Mammary epithelial cell (primary cell): ENCODE measurements at regions of chr13 and their contacts with region 1.

Region 1: DNA sequence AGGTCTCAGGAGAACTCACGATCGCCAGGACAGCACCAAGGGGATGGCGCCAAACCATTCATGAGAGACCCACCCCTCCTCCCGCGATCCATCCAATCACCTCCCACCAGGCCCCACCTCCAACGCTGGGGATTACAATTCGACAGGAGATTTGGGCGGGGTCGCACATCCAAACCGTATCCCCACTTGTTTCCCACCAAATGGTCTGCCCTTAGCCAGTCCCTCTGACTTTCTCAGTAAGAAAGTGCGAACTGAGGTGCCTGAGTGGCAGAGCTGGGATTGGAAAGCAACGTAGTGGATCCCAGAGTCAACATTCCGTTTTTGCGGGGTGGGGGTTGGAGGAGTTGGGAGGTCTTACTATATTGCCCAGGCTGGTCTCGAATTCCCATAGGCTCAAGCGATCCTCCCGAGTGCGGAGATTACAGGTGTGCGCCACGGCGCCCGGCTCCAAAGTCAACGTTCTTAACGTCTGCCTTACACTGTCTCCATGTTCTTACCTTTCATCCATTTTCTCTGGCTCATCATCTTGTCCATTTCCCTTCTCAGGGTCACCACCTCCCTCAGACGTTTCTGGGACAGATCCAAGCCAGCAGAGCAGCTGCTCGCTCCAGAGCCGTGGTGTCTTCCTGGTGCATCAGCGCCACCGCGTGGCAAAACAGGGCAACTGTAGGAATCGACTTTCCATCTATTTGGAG is 102.7 kb upstream of the ABCC4 start:
- DNase-seq: peak; percentile 55
- H3K4me3 ChIP-seq: peak overlapping the region in 2 of 3 experiments; percentile 12 to 41
- H3K27ac ChIP-seq: no peak overlapping the region
- H3K4me1 ChIP-seq: peaks cover 4% of the 10 kb centered on the region
- H3K27me3 ChIP-seq: no peaks in the 10 kb centered on the region
- CTCF ChIP-seq: peak; percentile 90 to 93

Region 2: DNA sequence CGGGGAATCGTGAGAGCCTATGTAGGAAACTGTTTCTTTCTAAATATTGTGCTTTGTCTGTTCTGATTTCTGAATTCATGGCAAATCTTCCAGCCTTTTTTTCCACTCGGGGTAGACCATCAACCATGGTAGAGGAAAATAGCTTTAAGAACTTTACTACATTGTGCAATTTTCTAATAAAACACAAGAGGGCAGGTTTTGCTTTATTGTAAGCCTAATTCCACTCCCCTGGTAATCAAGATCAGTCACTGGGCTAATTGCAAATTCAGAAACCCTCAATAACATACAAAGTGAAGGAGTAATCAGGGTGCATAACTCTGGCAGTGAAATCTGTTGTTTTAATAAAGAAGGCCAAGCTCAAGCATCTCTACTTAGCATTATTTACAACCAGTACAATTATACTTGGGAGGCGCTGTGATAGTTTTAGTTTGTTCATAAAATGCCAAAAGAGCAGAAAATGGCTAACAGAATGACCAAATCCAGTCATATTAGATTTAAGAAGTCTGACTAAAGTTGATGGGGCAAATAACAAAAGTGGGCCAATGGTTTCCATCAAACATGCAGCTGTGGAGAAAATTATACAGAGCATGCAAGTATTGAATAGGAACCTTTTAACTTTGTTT is 968.3 kb before region 1 on chr13:
- CTCF ChIA-PET with region 1: no interaction called
- dilution Hi-C with region 1: no loop called
- in situ Hi-C with region 1: no loop called
- intact Hi-C with region 1: loop called (anchors 10 kb)
- DNase-seq: peak; percentile 28
- H3K4me3 ChIP-seq: no peak overlapping the region
- H3K27ac ChIP-seq: no peak overlapping the region
- H3K4me1 ChIP-seq: no peaks in the 10 kb centered on the region
- H3K27me3 ChIP-seq: peaks cover 3% of the 10 kb centered on the region
- CTCF ChIP-seq: peak; percentile 45 to 61

Region 3: DNA sequence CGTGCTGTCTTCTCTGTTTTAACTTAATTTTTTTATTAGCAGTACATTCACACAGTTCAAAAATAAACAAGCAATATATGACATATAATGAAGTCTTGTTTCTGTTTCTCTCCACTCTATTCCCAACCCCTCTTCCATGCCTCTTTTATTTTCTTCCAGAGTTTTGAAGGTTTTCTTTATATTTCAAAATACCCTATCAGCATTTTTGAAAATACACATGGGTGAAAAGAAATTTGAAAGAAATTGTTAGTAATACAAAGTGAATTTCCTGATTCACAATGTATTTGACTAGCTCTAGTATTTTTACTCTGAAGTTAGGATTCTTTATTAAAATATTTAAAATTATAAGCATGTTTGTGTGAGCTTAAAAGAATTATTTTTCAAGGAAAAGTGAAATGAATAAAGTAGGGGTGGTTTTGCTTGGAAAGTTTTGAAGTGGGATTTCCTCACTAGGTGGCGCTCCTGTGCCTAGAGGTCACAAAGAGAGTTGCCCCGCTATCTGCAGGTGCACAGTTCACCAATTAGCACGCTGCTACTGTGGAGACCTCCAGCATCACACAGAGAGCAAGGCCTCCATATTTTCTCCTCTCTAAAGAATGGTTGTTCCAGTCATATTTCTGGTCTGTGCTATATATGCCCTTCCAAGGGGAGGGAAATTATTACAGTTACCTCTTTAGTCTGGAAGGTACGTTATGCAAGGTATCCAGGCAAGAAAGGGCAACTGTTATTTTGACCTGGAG is 729.2 kb before region 1 on chr13:
- CTCF ChIA-PET with region 1: no interaction called
- dilution Hi-C with region 1: no loop called
- in situ Hi-C with region 1: no loop called
- intact Hi-C with region 1: loop called (anchors 2 kb)
- DNase-seq: peak; percentile 24
- H3K4me3 ChIP-seq: no peak overlapping the region
- H3K27ac ChIP-seq: no peak overlapping the region
- H3K4me1 ChIP-seq: no peaks in the 10 kb centered on the region
- H3K27me3 ChIP-seq: peaks cover 2% of the 10 kb centered on the region
- CTCF ChIP-seq: peak; percentile 73 to 86

Region 4: GRCh38 chr13:95083758-95084157 is 320.2 kb before region 1 on chr13:
- CTCF ChIA-PET with region 1: no interaction called
- dilution Hi-C with region 1: no loop called
- in situ Hi-C with region 1: no loop called
- intact Hi-C with region 1: no loop called
- DNase-seq: peak; percentile 65
- H3K4me3 ChIP-seq: no peak overlapping the region
- H3K27ac ChIP-seq: no peak overlapping the region
- H3K4me1 ChIP-seq: no peaks in the 10 kb centered on the region
- H3K27me3 ChIP-seq: no peaks in the 10 kb centered on the region
- CTCF ChIP-seq: no peak

Region 5: GRCh38 chr13:95301183-95301967 is 102.6 kb before region 1 on chr13 and contains the start of gene ABCC4:
- CTCF ChIA-PET with region 1: interaction called, 5 read pairs
- dilution Hi-C with region 1: no loop called
- in situ Hi-C with region 1: no loop called
- intact Hi-C with region 1: loop called (anchors 1 kb)
- DNase-seq: peak; percentile 72
- H3K4me3 ChIP-seq: peak within 1 kb of the TSS; percentile 64 to 94 (median 75)
- H3K27ac ChIP-seq: peak within 1 kb of the TSS; percentile 45
- H3K4me1 ChIP-seq: peaks cover 12% of the 10 kb centered on the region
- H3K27me3 ChIP-seq: no peaks in the 10 kb centered on the region
- CTCF ChIP-seq: no peak
- total RNA-seq, gene ABCC4: 4.0 to 8.1 TPM

Region 6: DNA sequence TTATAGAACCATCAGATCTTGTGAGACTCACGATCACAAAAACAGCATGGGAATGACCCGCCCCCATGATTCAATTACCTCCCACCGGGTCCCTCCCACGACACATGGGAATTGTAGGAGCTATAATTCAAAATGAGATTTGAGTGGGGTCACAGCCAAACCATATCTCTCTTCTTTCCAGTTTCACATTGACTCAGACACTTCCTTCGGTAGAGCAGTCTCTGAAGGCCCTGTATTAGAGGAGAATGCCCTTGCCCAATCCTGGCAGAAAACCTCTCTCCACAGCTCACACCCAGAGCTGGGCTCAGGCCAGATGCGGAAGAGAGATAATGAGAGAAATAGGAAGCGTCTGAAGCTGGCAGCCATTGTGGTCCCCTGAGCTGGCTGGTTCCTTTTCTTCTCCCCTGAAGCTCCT is 76.2 kb after region 1 on chr13:
- CTCF ChIA-PET with region 1: no interaction called
- dilution Hi-C with region 1: no loop called
- in situ Hi-C with region 1: no loop called
- intact Hi-C with region 1: loop called (anchors 1 kb)
- DNase-seq: no peak
- H3K4me3 ChIP-seq: no peak overlapping the region
- H3K27ac ChIP-seq: no peak overlapping the region
- H3K4me1 ChIP-seq: peaks cover 12% of the 10 kb centered on the region
- H3K27me3 ChIP-seq: no peaks in the 10 kb centered on the region
- CTCF ChIP-seq: no peak